ENCODE measurements at regions of chr2 and their contacts with region 1.

Region 1: GRCh38 chr2:152036611-152037469 is 62.0 kb downstream of the CACNB4 start:
- DNase-seq: peak; percentile 71
- ATAC-seq: peak; percentile 97
- H3K4me3 ChIP-seq: no peak overlapping the region
- H3K27ac ChIP-seq: no peak overlapping the region
- H3K4me1 ChIP-seq: no peaks in the 10 kb centered on the region; the same call in 1 of the 2 replicates
- H3K27me3 ChIP-seq: peaks cover 22% of the 10 kb centered on the region
- CTCF ChIP-seq: peak; percentile 87
- POLR2A ChIP-seq: no peak
- RAD21 ChIP-seq: peak; percentile 86

Region 2: DNA sequence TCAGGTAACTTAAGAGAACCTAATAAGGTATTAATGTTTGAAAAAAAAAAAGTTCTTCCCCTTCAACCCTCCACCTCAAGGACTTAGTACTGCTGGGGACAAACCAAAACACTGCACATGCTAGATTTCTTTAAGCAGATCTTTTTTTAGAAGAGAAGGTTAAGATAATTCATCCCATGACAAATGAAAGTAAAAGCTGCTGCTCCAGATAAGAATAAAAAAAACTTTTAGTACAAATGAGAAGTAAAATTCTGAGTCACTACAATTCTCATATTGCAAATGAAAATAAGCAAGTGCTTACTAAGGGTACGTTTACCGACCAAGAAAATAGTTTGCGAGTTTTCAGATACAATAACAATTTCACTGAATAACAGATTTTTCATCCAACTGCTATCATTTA is 129.8 kb after region 1 on chr2:
- CTCF ChIA-PET with region 1: interaction called, 3 read pairs
- POLR2A ChIA-PET with region 1: no interaction called
- dilution Hi-C with region 1: no loop called
- in situ Hi-C with region 1: loop called (anchors 10 kb)
- intact Hi-C with region 1: loop called (anchors 2 kb)
- DNase-seq: peak; percentile 81
- ATAC-seq: peak; percentile 83
- H3K4me3 ChIP-seq: no peak overlapping the region
- H3K27ac ChIP-seq: no peak overlapping the region
- H3K4me1 ChIP-seq: peaks cover 8% of the 10 kb centered on the region
- H3K27me3 ChIP-seq: no peaks in the 10 kb centered on the region
- CTCF ChIP-seq: no peak
- POLR2A ChIP-seq: no peak
- RAD21 ChIP-seq: no peak

Region 3: GRCh38 chr2:152175458-152176325 is 138.9 kb after region 1 on chr2 and contains the start of gene STAM2:
- CTCF ChIA-PET with region 1: interaction called, 6 read pairs
- POLR2A ChIA-PET with region 1: no interaction called
- dilution Hi-C with region 1: no loop called
- in situ Hi-C with region 1: no loop called
- intact Hi-C with region 1: loop called (anchors 1 kb)
- DNase-seq: peak; percentile 88
- ATAC-seq: peak; percentile 89
- H3K4me3 ChIP-seq: peak within 1 kb of the TSS; percentile 86
- H3K27ac ChIP-seq: peak within 1 kb of the TSS; percentile 97
- H3K4me1 ChIP-seq: peaks cover 2% of the 10 kb centered on the region
- H3K27me3 ChIP-seq: no peaks in the 10 kb centered on the region
- CTCF ChIP-seq: peak; percentile 99
- POLR2A ChIP-seq: peak; percentile 92
- RAD21 ChIP-seq: peak; percentile 87
- total RNA-seq, gene STAM2: 29.2 and 55.0 TPM in 2 replicates

Region 4: DNA sequence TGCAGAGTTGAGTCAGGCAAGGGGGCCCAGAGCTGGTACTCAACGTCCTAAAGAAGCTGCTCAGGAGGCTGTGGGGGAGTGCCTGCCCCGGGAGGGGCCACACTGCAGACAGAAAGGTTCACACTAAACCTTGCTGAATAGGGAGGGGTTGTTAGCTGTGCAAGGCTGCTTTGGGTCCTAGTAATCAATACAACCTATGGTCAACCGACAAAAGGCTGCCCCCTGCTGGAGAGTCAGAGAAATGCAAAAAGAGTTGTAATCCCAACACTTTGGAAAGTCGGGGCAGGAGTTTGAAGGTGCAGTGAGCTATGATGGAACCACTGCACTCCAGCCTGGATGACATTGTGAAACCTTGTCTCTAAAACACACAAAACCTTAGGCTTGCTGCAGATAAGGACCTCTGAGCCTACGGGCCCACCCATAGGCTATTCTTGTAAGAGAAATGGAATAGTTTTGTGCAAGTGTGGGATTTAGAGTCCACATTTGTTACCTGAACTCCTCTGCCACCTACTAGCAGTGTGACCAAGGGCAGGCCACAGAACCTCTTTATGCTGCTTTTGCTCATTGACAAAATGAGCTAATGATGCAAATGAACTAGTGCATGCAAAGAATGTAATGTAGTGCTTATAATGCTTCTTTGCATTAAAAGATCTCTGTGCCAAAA is 598.9 kb after region 1 on chr2:
- CTCF ChIA-PET with region 1: no interaction called
- POLR2A ChIA-PET with region 1: no interaction called
- dilution Hi-C with region 1: no loop called
- in situ Hi-C with region 1: loop called (anchors 10 kb)
- intact Hi-C with region 1: loop called (anchors 1 kb)
- DNase-seq: peak; percentile 53
- ATAC-seq: peak; percentile 79
- H3K4me3 ChIP-seq: no peak overlapping the region
- H3K27ac ChIP-seq: no peak overlapping the region
- H3K4me1 ChIP-seq: no peaks in the 10 kb centered on the region
- H3K27me3 ChIP-seq: no peaks in the 10 kb centered on the region
- CTCF ChIP-seq: peak; percentile 75
- POLR2A ChIP-seq: no peak
- RAD21 ChIP-seq: peak; percentile 82

Region 5: DNA sequence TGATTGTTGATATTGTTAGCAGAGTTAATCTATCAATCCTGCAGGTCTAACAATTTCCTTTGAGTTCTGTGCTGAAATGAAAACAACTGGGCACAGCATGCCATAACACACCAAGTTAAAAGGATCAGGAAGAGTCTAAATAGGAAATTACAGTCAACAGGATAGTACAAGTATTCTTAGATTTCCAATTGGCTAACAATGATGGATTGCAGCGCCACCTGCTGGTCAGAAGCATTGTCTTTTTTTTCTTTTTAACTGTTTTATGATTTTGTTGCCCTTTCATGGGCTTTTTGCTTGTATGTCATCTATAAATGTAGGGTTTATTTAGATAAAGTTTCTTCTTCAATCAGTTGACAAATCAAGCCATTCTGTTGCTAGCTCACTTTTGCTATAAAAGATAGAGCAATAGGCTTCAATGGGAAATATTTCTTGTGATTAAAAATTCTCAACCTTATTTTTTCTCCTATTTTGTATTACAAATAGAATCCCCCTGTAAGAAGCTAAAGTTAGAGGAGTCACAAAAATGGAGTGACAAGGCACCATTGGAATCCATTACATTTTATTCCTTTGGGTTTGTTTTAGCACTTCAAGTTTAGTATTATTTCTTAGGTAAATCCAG is 1482.5 kb after region 1 on chr2:
- CTCF ChIA-PET with region 1: no interaction called
- POLR2A ChIA-PET with region 1: no interaction called
- dilution Hi-C with region 1: no loop called
- in situ Hi-C with region 1: no loop called
- intact Hi-C with region 1: loop called (anchors 10 kb)
- DNase-seq: peak; percentile 39
- ATAC-seq: peak; percentile 37
- H3K4me3 ChIP-seq: no peak overlapping the region
- H3K27ac ChIP-seq: no peak overlapping the region
- H3K4me1 ChIP-seq: no peaks in the 10 kb centered on the region
- H3K27me3 ChIP-seq: no peaks in the 10 kb centered on the region
- CTCF ChIP-seq: peak; percentile 61
- POLR2A ChIP-seq: no peak
- RAD21 ChIP-seq: peak; percentile 52

Measured in IMR-90 (cell line).